Dendritic cell treated with granulocyte-macrophage colony-stimulating factor and Interleukin-4, amounts not matched to agents 40 ng/mL and 50 ng/mL, for 4 days (primary cell): ENCODE measurements at regions of chr6 and their contacts with region 1.

Region 1: DNA sequence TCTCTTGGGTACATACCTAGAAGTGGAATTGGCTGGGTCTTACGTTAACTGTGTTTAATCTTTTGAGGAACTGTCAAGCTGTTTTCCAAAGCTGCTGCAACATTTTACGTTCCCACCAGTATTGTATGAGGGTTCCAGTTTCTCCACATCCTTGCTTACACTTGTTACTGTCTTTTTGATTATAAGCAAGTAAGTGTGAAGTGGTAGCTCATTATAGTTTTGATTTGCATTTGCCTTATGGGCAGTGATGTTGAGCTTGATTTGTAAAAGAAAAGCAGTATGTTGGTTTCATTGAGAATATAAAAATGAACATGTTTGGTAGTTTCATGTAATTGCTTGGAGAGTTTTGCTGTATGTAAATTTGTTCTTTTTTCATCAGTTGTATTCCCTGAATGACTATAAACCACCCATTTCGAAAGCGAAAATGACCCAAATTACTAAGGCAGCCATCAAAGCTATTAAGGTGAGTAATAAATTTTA is 40.4 kb downstream of the SCAF8 start:
- H3K4me3 Mint-ChIP-seq: no peak overlapping the region
- H3K27ac Mint-ChIP-seq: no peak overlapping the region
- H3K4me1 Mint-ChIP-seq: peaks cover 19% of the 10 kb centered on the region
- H3K27me3 Mint-ChIP-seq: no peaks in the 10 kb centered on the region

Region 2: DNA sequence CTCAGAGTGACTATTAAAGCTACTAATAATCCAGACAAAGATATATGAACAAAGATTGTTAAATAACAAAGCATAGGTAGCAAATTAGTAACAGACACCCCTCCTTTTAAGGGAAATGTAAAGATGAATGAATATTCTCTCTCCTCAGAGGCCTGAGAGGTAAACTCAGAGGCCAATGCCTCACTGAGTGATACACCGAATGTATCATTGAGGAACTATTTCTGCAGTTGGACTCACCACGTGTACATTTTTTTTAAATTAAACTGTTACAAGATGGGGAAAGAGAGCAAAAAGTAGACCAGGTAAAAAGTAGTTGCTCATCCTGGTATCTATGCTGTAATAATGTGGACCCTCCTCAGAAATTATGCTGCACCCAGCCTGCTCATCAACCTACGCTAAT is 344.8 kb before region 1 on chr6:
- intact Hi-C with region 1: no loop called
- H3K4me3 Mint-ChIP-seq: no peak overlapping the region
- H3K27ac Mint-ChIP-seq: no peak overlapping the region
- H3K4me1 Mint-ChIP-seq: no peaks in the 10 kb centered on the region
- H3K27me3 Mint-ChIP-seq: no peaks in the 10 kb centered on the region

Region 3: DNA sequence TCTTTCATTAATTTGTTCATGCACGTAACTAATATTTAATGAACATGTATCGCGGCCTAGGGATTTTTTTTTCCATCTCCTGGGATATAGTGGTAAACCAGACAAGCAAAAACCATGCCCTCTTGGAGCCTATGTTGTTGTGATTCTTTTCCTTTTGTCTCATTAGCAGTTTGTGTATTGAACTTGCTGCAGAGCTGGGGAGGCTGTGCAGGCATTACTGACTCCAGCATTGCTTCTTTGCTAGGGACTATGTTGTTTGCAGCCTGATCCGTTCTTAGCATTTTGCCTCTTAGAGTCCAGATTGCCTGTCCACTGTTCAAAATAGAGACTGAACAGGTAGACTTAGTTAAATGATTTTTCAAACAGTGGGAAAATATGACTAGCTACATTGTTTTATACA is 30.8 kb before region 1 on chr6:
- intact Hi-C with region 1: loop called (anchors 5 kb)
- H3K4me3 Mint-ChIP-seq: no peak overlapping the region
- H3K27ac Mint-ChIP-seq: no peak overlapping the region
- H3K4me1 Mint-ChIP-seq: peaks cover 26% of the 10 kb centered on the region
- H3K27me3 Mint-ChIP-seq: no peaks in the 10 kb centered on the region

Region 4: DNA sequence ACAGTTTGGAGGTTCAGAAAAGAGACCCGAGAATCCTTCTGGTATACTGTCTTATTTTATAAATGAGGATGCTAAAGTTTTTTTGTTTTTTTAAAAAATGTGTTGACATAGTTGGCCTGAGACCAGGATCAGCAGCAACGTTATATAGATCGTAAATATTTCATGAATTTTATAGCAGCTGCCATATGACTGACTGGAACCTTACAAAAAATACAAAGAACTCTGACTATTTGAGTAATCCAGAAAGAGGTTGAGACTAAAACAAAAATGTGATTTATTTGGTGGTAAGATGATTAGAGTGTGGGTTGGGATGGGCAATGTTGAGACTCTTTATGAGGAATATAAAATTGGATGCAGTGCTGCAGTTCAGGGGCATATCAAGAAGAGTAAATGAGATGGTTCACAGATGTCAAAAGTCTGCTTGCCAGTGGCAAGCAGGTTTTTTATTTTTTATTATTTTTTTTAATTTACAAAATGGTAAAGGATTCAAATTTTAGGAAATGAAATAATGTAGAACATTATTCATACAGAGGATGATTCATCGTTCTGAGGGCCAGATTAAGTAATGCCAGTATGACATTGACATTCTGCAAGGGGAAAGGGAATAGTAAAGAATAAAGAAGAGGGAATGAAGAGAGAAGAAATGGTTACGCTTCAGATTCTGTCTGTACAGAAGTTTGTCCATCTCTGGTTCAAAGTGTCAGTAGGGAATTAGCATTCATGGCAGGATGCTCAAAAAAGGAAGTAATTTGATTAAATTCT is 18.1 kb after region 1 on chr6:
- intact Hi-C with region 1: no loop called
- H3K4me3 Mint-ChIP-seq: no peak overlapping the region
- H3K27ac Mint-ChIP-seq: no peak overlapping the region
- H3K4me1 Mint-ChIP-seq: peaks cover 15% of the 10 kb centered on the region
- H3K27me3 Mint-ChIP-seq: no peaks in the 10 kb centered on the region